Psoas muscle (tissue), 8 donors: ENCODE measurements at regions of chr18 and their contacts with region 1.

Region 1: DNA sequence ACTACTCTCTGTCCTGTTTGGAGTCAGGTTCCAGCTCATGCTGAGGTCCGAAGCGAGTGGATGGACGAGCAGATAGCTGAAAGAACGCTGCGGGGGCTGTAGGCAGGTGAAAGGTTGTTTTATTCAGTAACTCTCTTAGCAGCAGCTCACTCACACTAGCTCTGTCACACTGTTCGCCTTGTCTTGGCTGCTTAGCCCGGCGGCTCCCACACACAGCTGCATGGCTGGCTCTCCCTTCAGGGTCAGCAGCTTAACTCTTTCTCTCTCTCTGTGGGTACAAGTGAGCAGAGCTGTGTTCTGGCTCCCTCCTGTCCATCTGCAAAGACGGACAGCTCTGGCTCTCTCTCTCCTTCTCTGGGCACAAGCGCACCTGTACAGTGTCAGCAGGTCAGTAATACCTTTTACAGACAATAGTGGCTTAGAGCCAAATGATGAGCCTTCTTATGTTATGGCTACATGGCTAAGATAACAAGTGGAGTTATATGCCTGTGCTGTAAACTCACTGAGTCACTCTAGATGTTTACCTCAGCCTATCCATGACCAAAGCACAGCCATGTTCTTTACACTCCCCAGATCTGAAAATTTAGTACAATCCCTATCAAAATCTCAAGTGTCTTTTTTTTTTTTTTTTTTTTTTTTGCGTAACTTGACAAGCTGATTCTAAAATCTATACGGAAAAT is 149.3 kb downstream of the GALNT1 start:
- DNase-seq: no peak
- ATAC-seq: no peak
- H3K4me3 ChIP-seq: peak overlapping the region; percentile 17
- H3K27ac ChIP-seq: no peak overlapping the region
- H3K4me1 ChIP-seq: no peaks in the 10 kb centered on the region
- H3K27me3 ChIP-seq: no peaks in the 10 kb centered on the region
- CTCF ChIP-seq: no peak

Region 2: GRCh38 chr18:35459005-35459441 is 271.8 kb before region 1 on chr18:
- intact Hi-C with region 1: loop called in 1 of 2 experiments (anchors 10 kb)
- DNase-seq: peak; percentile 35 to 68
- ATAC-seq: peak; percentile 72 to 85 (median 79)
- H3K4me3 ChIP-seq: no peak overlapping the region
- H3K27ac ChIP-seq: peak overlapping the region; percentile 5
- H3K4me1 ChIP-seq: peaks cover 4% of the 10 kb centered on the region
- H3K27me3 ChIP-seq: no peaks in the 10 kb centered on the region
- CTCF ChIP-seq: no peak